Mammary epithelial cell (primary cell): ENCODE measurements at regions of chr6 and their contacts with region 1.

Region 1: DNA sequence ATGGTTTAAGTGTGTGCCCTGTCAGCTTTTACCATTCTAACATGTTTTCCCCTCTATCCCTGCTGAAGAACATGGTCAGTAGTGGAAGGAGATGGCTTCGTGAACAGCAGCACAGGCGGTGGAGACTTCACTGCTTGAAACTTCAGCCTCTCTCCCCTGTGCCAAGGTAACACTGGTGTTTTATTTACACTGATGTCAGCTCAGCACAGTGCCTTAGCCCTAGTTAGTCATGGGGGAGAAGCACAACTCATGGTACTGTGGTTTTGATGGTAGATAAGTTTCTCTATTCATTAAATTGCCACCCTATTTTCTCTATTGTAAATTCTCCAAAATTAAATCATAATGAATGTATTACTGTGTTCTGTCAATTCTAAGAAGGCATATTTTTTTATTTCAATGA is 56.6 kb downstream of the MTHFD1L start:
- DNase-seq: peak; percentile 63
- H3K4me3 ChIP-seq: no peak overlapping the region
- H3K27ac ChIP-seq: no peak overlapping the region
- H3K4me1 ChIP-seq: peaks cover 9% of the 10 kb centered on the region
- H3K27me3 ChIP-seq: no peaks in the 10 kb centered on the region
- CTCF ChIP-seq: no peak

Region 2: GRCh38 chr6:150900049-150900448 is 22.1 kb before region 1 on chr6:
- CTCF ChIA-PET with region 1: no interaction called
- dilution Hi-C with region 1: no loop called
- in situ Hi-C with region 1: no loop called
- intact Hi-C with region 1: loop called (anchors 2 kb)
- DNase-seq: no peak
- H3K4me3 ChIP-seq: no peak overlapping the region
- H3K27ac ChIP-seq: no peak overlapping the region
- H3K4me1 ChIP-seq: peaks cover 2% of the 10 kb centered on the region
- H3K27me3 ChIP-seq: no peaks in the 10 kb centered on the region
- CTCF ChIP-seq: no peak